ENCODE measurements at regions of chr16 and their contacts with region 1.

Region 1: GRCh38 chr16:87203060-87203656 is 114.0 kb downstream of the C16orf95 start:
- DNase-seq: peak; percentile 58
- H3K4me3 Mint-ChIP-seq: no peak overlapping the region
- H3K27ac Mint-ChIP-seq: no peak overlapping the region
- H3K4me1 Mint-ChIP-seq: no peaks in the 10 kb centered on the region
- H3K27me3 Mint-ChIP-seq: peaks cover 16% of the 10 kb centered on the region

Region 2: DNA sequence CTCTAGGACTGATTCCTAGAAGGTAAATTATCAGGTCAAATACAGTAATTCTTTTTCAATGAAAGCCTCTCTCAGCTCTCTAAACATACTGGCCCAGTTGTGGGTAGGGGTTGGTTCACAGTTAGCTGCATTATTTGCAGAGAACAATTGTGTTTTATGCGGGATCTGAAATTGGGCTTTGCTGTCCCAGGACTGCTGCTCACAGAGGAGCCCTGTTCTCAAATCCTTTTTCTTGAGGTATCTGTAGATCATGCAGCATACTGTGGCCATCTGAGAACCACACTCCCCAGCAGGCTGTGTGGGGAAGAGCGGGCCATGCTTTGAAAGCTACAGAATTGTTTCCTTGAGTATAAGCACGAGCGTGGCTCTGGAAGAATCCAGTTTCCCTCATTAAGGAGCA is 665.7 kb before region 1 on chr16:
- CTCF ChIA-PET with region 1: no interaction called
- DNase-seq: no peak
- H3K4me3 Mint-ChIP-seq: no peak overlapping the region
- H3K27ac Mint-ChIP-seq: no peak overlapping the region
- H3K4me1 Mint-ChIP-seq: no peaks in the 10 kb centered on the region
- H3K27me3 Mint-ChIP-seq: no peaks in the 10 kb centered on the region

Region 3: GRCh38 chr16:87278191-87279095 is 75.3 kb after region 1 on chr16:
- CTCF ChIA-PET with region 1: interaction called, 16 read pairs
- DNase-seq: peak; percentile 70
- H3K4me3 Mint-ChIP-seq: no peak overlapping the region
- H3K27ac Mint-ChIP-seq: no peak overlapping the region
- H3K4me1 Mint-ChIP-seq: peaks cover 7% of the 10 kb centered on the region
- H3K27me3 Mint-ChIP-seq: no peaks in the 10 kb centered on the region

Measured in activated naive CD4-positive, alpha-beta T cell treated with anti-CD3 and anti-CD28 coated beads, Interleukin-2, amount 10 ng/mL, durations not matched to agents 7 days and 5 days (primary cell).